ENCODE measurements at regions of chr3 and their contacts with region 1.

Region 1: DNA sequence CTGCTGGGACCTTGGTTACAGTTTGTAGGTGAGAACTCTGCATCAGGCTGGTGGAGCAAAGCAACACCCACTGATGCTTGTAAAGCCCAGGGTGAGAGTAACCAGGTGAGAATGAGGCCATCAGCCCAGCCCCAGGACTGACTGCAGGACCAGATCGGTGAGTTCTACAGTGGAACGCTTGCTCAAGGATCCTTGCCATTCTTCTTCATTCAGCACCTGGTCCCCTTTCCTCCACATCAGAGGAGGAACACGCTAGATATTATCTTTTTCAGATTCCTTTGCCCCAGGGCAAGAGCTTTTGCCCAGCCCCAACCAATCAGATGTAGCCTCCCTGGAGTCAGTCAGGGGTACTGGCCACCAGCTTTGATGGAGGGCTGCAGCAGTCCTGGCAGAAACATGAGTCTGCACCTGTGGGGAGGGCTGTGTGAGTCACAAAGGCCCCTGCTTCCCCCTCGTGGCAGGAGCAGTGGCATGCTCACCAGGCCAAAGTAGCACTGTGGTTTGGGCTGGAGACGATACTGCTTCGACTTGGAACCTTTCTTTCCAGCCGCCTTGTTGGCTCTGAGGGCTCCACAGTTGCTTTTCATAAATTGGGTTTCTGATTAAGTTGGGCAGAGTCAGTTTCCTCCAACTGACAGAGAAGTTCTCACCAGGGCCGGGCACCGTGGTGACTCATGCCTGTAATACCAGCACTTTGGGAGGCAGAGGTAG is 3.5 kb upstream of the SHISA5 start:
- DNase-seq: no peak
- ATAC-seq: peak; percentile 90
- H3K4me3 ChIP-seq: no peak overlapping the region
- H3K27ac ChIP-seq: no peak overlapping the region
- H3K4me1 ChIP-seq: peaks cover 6% of the 10 kb centered on the region
- H3K27me3 ChIP-seq: no peaks in the 10 kb centered on the region
- CTCF ChIP-seq: peak; percentile 80 to 83 (median 81); a peak in 5 of 6 replicates
- EP300 ChIP-seq: no peak
- POLR2A ChIP-seq: no peak
- RAD21 ChIP-seq: peak; percentile 91

Region 2: GRCh38 chr3:48273594-48274211 is 233.8 kb before region 1 on chr3:
- CTCF ChIA-PET with region 1: no interaction called
- POLR2A ChIA-PET with region 1: no interaction called
- RAD21 ChIA-PET with region 1: no interaction called
- SMC1A ChIA-PET with region 1: no interaction called
- in situ Hi-C with region 1: no loop called
- intact Hi-C with region 1: loop called (anchors 5 kb)
- DNase-seq: peak; percentile 30
- ATAC-seq: peak; percentile 91
- H3K4me3 ChIP-seq: no peak overlapping the region
- H3K27ac ChIP-seq: no peak overlapping the region
- H3K4me1 ChIP-seq: no peaks in the 10 kb centered on the region
- H3K27me3 ChIP-seq: no peaks in the 10 kb centered on the region
- CTCF ChIP-seq: peak; percentile 73 to 85 (median 76)
- EP300 ChIP-seq: no peak
- POLR2A ChIP-seq: no peak
- RAD21 ChIP-seq: peak; percentile 84

Region 3: DNA sequence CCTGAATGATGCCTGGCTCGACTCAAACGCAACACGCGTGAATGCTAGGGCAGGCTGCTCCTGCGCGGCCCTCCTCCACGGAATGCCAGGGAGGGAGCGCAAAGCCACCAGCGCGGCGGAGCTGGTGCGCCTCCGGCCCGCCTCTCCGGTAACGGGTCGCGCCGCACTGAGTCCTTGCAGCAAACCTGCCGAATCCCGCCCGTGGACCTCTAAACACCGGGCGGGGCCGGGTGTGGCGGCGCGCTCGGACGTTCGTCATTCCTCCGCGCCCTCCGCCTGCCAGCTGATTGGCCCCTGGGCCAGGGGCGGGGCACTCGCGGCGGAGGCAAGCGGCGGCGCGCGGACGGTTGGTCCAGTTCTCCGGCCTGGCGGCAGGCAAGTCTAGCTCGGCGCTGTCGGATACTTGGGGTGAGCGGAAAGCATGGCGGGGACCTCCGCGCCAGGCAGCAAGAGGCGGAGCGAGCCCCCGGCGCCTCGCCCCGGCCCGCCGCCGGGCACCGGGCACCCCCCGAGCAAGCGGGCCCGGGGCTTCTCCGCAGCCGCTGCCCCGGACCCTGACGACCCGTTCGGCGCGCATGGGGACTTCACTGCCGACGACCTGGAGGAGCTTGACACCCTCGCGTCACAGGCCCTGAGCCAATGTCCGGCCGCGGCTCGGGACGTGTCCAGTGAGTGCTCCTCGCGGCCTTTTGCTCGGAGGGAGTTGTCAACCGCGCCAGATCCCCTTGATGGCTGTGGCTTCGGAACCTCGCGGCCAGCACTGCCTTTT is 60.9 kb before region 1 on chr3 and contains the start of gene ATRIP:
- CTCF ChIA-PET with region 1: interaction called, 8 read pairs
- POLR2A ChIA-PET with region 1: no interaction called
- RAD21 ChIA-PET with region 1: interaction called, 3 read pairs
- SMC1A ChIA-PET with region 1: interaction called, 5 read pairs
- in situ Hi-C with region 1: no loop called
- intact Hi-C with region 1: loop called (anchors 5 kb)
- DNase-seq: no peak
- ATAC-seq: peak; percentile 96
- H3K4me3 ChIP-seq: peak within 1 kb of the TSS; percentile 74
- H3K27ac ChIP-seq: peak within 1 kb of the TSS; percentile 72
- H3K4me1 ChIP-seq: peaks cover 13% of the 10 kb centered on the region
- H3K27me3 ChIP-seq: no peaks in the 10 kb centered on the region
- CTCF ChIP-seq: no peak
- EP300 ChIP-seq: no peak
- POLR2A ChIP-seq: peak; percentile 98
- RAD21 ChIP-seq: no peak
- polyA plus RNA-seq, gene ATRIP: 1.4 to 2.4 TPM

Region 4: DNA sequence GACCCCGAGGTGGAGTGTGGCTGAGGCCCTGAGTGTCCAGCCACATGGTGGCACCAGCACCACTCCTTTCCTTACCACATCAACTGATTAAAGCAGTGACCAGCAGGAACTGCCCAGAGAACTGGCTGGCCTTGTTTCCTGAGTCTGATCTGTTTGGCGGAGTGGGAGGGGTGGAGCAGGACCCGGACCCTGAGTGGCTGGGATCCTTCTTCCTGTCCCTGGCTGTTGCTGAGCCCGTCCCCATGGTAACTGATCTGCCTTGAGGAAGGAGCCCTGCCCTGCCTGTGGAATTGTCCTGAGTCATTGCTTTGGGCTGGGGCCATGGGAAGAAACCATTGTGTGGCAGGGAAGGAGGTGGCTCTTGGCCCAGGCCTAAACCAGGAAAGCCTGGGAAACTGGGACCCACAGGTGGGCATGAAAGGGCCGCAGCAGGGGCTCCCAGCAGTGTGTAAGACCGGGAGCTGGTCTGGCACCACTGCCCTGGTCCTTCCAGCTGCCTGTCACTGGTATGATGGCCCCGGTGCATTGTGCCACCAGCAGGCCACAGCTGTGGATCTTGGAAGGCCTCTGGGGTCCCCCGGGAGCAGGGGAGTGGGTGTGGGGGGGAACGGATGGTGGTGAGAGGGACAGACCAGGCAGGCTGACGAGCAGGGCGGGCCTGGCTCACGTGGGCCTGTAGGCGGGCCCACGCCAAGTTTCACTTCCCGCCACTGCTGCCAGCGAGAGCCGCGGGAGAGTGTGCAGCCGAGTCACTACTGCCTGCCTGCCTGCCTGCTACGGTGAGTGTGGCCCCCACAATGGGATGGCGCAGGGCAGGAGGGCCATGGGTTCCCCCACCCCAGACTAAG is 41.8 kb before region 1 on chr3:
- CTCF ChIA-PET with region 1: interaction called, 19 read pairs
- POLR2A ChIA-PET with region 1: interaction called, 3 read pairs
- RAD21 ChIA-PET with region 1: interaction called, 4 read pairs
- SMC1A ChIA-PET with region 1: interaction called, 20 read pairs
- in situ Hi-C with region 1: no loop called
- intact Hi-C with region 1: loop called (anchors 1 kb)
- DNase-seq: no peak
- ATAC-seq: peak; percentile 94
- H3K4me3 ChIP-seq: peak overlapping the region; percentile 88
- H3K27ac ChIP-seq: peak overlapping the region; percentile 96
- H3K4me1 ChIP-seq: peaks cover 41% of the 10 kb centered on the region
- H3K27me3 ChIP-seq: no peaks in the 10 kb centered on the region
- CTCF ChIP-seq: peak; percentile 52 to 67 (median 56); a peak in 5 of 6 replicates
- EP300 ChIP-seq: no peak
- POLR2A ChIP-seq: peak; percentile 98
- RAD21 ChIP-seq: peak; percentile 64

Region 5: GRCh38 chr3:48472915-48473616 is 34.4 kb before region 1 on chr3:
- CTCF ChIA-PET with region 1: interaction called, 13 read pairs
- POLR2A ChIA-PET with region 1: interaction called, 3 read pairs
- RAD21 ChIA-PET with region 1: interaction called, 9 read pairs
- SMC1A ChIA-PET with region 1: interaction called, 20 read pairs
- in situ Hi-C with region 1: no loop called
- intact Hi-C with region 1: no loop called
- DNase-seq: peak; percentile 96
- ATAC-seq: peak; percentile 91
- H3K4me3 ChIP-seq: peak overlapping the region; percentile 71
- H3K27ac ChIP-seq: peak overlapping the region; percentile 100
- H3K4me1 ChIP-seq: peaks cover 31% of the 10 kb centered on the region
- H3K27me3 ChIP-seq: no peaks in the 10 kb centered on the region
- CTCF ChIP-seq: peak; percentile 35 to 55 (median 54); a peak in 5 of 6 replicates
- EP300 ChIP-seq: peak; percentile 59 to 64; a peak in 2 of 4 replicates
- POLR2A ChIP-seq: peak; percentile 88
- RAD21 ChIP-seq: no peak

Measured in GM12878 (cell line).